ENCODE measurements at regions of chr13 and their contacts with region 1.

Region 1: DNA sequence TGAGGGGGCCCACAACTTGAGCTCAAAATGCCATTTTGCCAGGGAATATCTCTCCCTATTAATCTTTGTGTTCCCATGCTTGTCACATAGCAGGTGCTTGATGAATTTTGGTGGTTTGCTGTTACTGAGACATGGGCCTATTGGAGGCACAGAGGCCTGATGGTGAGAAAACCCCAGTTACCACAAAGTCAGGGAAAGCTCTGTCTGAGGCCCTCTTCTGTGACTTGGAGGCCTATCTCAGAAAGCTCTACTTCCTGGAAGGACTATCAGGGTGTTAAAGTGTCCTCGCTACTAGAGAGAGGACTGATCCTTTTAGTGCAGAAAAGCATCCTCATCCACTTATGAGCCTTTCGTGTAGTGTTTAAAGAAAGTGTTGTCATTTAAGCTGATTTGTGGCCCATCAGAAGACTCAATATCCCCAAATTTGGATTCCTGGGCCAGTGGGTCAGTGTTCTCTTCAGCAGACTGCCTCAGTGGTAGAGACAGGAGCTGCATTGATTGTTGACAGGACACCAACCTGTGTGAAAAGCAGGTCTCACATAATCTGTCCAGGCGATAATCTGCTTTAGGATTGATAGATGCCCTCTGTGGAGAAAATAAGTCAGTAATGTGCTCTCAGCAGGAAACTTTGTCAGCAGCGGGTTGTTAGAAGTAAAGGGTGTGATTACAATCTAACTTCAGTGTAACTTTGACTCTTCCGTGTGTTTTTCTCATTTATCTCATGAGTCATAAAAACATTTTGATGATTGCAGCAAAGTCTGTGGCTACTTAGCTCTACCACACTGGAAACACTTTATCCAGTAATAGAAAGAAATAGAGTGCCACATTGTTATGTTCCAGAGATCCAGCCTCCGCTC is 121.0 kb downstream of the AKAP11 start:
- DNase-seq: peak; percentile 52
- H3K4me3 Mint-ChIP-seq: peak overlapping the region; percentile 54
- H3K27ac Mint-ChIP-seq: peak overlapping the region; percentile 96
- H3K4me1 Mint-ChIP-seq: peaks cover 78% of the 10 kb centered on the region
- H3K27me3 Mint-ChIP-seq: no peaks in the 10 kb centered on the region

Region 2: DNA sequence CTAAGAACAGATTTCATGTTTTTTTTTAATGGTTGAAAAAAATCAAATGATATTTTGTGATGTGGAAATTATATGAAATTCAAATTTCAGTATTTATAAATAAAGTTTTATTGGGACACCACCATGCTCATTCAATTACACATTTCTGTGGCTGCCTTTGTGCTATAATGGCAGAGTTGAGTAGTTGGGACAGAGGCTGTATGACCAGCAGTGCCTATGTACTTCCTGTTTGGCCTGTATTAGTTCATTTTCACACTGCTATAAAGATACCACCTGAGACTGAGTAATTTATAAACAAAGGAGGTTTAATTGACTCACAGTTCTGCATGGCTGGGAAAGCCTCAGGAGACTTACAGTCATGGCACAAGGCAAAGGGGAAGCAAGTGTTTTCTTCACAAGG is 87.4 kb before region 1 on chr13:
- CTCF ChIA-PET with region 1: no interaction called
- POLR2A ChIA-PET with region 1: no interaction called
- DNase-seq: no peak
- H3K4me3 Mint-ChIP-seq: no peak overlapping the region
- H3K27ac Mint-ChIP-seq: no peak overlapping the region
- H3K4me1 Mint-ChIP-seq: peaks cover 12% of the 10 kb centered on the region
- H3K27me3 Mint-ChIP-seq: no peaks in the 10 kb centered on the region

Region 3: GRCh38 chr13:42377640-42378382 is 15.1 kb before region 1 on chr13:
- CTCF ChIA-PET with region 1: interaction called, 35 read pairs
- POLR2A ChIA-PET with region 1: interaction called, 4 read pairs
- DNase-seq: peak; percentile 71
- H3K4me3 Mint-ChIP-seq: peak overlapping the region; percentile 21
- H3K27ac Mint-ChIP-seq: peak overlapping the region; percentile 85
- H3K4me1 Mint-ChIP-seq: peaks cover 66% of the 10 kb centered on the region
- H3K27me3 Mint-ChIP-seq: no peaks in the 10 kb centered on the region

Measured in activated CD4-positive, alpha-beta T cell treated with anti-CD3 and anti-CD28 coated beads, Interleukin-2, amount 10 ng/mL, durations not matched to agents 7 days and 5 days (primary cell).